Activated CD4-positive, alpha-beta memory T cell treated with anti-CD3 and anti-CD28 coated beads, Interleukin-2, amount 10 ng/mL, durations not matched to agents 7 days and 5 days (primary cell): ENCODE measurements at regions of chr1 and their contacts with region 1.

Region 1: GRCh38 chr1:156625436-156626078 is 6.3 kb downstream of the HAPLN2 start:
- DNase-seq: peak; percentile 62
- H3K4me3 Mint-ChIP-seq: peak overlapping the region; percentile 35
- H3K27ac Mint-ChIP-seq: no peak overlapping the region
- H3K4me1 Mint-ChIP-seq: peaks cover 12% of the 10 kb centered on the region
- H3K27me3 Mint-ChIP-seq: peaks cover 64% of the 10 kb centered on the region

Region 2: GRCh38 chr1:156054500-156055280 is 570.9 kb before region 1 on chr1 and contains the start of gene LAMTOR2:
- CTCF ChIA-PET with region 1: no interaction called
- POLR2A ChIA-PET with region 1: no interaction called
- DNase-seq: peak; percentile 97
- H3K4me3 Mint-ChIP-seq: peak within 1 kb of the TSS; percentile 91
- H3K27ac Mint-ChIP-seq: peak within 1 kb of the TSS; percentile 82
- H3K4me1 Mint-ChIP-seq: peaks cover 33% of the 10 kb centered on the region
- H3K27me3 Mint-ChIP-seq: no peaks in the 10 kb centered on the region
- total RNA-seq, gene LAMTOR2: 63.1 to 66.2 TPM

Region 3: GRCh38 chr1:156517746-156518145 is 107.8 kb before region 1 on chr1:
- CTCF ChIA-PET with region 1: no interaction called
- POLR2A ChIA-PET with region 1: no interaction called
- DNase-seq: no peak
- H3K4me3 Mint-ChIP-seq: no peak overlapping the region
- H3K27ac Mint-ChIP-seq: no peak overlapping the region
- H3K4me1 Mint-ChIP-seq: no peaks in the 10 kb centered on the region
- H3K27me3 Mint-ChIP-seq: peaks cover 4% of the 10 kb centered on the region

Region 4: DNA sequence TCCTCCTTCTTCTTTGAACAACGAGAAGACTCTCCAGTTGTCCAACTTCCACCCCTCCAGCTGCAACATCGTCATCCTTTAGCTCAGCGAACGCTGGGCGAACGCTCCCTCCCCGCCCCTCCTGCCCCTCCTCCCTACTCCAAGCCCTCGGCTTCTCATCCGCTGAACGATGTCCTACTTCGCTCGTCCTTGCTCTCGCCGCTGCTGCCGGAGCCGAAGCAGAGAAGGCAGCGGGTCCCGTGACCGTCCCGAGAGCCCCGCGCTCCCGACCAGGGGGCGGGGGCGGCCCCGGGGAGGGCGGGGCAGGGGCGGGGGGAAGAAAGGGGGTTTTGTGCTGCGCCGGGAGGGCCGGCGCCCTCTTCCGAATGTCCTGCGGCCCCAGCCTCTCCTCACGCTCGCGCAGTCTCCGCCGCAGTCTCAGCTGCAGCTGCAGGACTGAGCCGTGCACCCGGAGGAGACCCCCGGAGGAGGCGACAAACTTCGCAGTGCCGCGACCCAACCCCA is 16.3 kb after region 1 on chr1 and contains the start of gene BCAN:
- CTCF ChIA-PET with region 1: interaction called, 80 read pairs
- POLR2A ChIA-PET with region 1: interaction called, 7 read pairs
- DNase-seq: no peak
- H3K4me3 Mint-ChIP-seq: no peak within 1 kb of the TSS
- H3K27ac Mint-ChIP-seq: peak within 1 kb of the TSS; percentile 49
- H3K4me1 Mint-ChIP-seq: peaks cover 42% of the 10 kb centered on the region
- H3K27me3 Mint-ChIP-seq: peaks cover 82% of the 10 kb centered on the region
- total RNA-seq, gene BCAN: not detected

Region 5: DNA sequence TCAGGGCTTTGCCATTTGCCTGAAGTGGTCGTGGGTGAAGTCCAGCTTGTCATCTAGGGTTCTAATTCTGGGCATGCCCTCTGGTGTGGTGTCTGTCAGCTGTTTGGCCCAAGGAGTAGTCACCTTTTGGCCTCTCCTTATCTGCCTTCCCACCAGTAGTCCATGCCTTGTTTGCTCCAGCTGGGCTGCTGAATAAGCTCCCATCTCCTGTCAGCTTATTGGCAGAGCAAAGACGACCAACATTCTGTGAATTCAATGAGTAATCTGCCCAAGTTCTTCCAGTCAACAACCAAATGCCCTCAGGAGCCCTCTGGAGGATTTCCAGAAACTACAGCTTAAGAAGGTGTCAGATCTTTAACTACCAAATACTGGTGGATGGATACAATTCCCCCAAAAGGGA is 23.4 kb after region 1 on chr1:
- CTCF ChIA-PET with region 1: interaction called, 80 read pairs
- POLR2A ChIA-PET with region 1: interaction called, 7 read pairs
- DNase-seq: no peak
- H3K4me3 Mint-ChIP-seq: no peak overlapping the region
- H3K27ac Mint-ChIP-seq: no peak overlapping the region
- H3K4me1 Mint-ChIP-seq: peaks cover 14% of the 10 kb centered on the region
- H3K27me3 Mint-ChIP-seq: peaks cover 75% of the 10 kb centered on the region

Region 6: DNA sequence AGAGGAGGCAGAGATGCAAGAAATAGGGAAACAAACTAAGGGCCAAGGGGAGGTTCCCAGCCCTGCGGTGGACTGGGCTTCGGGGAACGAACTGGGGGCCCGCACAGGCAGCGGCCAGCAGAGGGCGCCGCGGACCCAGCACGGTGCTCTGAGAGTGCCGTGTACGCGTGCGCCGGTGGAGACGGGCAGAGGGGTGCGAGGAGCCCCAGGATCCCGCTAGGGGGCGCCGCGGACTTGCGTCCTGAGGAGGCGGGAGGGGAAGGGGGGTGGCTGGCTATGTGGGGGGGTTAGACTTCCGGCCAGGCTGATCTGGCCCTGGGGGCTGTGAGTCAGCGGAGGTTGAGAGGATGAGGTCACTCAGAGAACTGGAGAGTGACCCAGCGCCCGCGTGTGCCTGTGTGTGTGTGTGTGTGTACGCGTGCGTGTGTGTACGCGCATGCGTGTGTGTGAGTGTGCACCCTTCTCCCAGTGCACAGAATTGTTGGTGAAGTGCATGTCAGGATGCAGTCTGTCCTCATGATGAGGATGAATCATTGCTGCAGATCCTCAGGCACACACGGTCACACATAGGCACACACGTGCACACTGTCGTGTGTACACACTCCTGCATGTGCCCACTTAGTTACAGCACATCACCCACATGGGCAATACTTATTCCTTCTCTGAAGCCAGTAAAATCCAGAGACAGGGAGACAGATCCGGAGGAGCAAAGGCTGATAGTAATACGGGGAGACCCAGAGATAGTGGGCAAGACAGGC is 34.6 kb after region 1 on chr1:
- CTCF ChIA-PET with region 1: interaction called, 275 read pairs
- POLR2A ChIA-PET with region 1: interaction called, 3 read pairs
- DNase-seq: peak; percentile 95
- H3K4me3 Mint-ChIP-seq: peak overlapping the region; percentile 83
- H3K27ac Mint-ChIP-seq: peak overlapping the region; percentile 86
- H3K4me1 Mint-ChIP-seq: peaks cover 72% of the 10 kb centered on the region
- H3K27me3 Mint-ChIP-seq: peaks cover 30% of the 10 kb centered on the region

Region 7: GRCh38 chr1:156677616-156678596 is 52.3 kb after region 1 on chr1:
- CTCF ChIA-PET with region 1: interaction called, 29 read pairs
- POLR2A ChIA-PET with region 1: no interaction called
- DNase-seq: peak; percentile 35
- H3K4me3 Mint-ChIP-seq: no peak overlapping the region
- H3K27ac Mint-ChIP-seq: no peak overlapping the region
- H3K4me1 Mint-ChIP-seq: peaks cover 14% of the 10 kb centered on the region
- H3K27me3 Mint-ChIP-seq: peaks cover 76% of the 10 kb centered on the region

Region 8: DNA sequence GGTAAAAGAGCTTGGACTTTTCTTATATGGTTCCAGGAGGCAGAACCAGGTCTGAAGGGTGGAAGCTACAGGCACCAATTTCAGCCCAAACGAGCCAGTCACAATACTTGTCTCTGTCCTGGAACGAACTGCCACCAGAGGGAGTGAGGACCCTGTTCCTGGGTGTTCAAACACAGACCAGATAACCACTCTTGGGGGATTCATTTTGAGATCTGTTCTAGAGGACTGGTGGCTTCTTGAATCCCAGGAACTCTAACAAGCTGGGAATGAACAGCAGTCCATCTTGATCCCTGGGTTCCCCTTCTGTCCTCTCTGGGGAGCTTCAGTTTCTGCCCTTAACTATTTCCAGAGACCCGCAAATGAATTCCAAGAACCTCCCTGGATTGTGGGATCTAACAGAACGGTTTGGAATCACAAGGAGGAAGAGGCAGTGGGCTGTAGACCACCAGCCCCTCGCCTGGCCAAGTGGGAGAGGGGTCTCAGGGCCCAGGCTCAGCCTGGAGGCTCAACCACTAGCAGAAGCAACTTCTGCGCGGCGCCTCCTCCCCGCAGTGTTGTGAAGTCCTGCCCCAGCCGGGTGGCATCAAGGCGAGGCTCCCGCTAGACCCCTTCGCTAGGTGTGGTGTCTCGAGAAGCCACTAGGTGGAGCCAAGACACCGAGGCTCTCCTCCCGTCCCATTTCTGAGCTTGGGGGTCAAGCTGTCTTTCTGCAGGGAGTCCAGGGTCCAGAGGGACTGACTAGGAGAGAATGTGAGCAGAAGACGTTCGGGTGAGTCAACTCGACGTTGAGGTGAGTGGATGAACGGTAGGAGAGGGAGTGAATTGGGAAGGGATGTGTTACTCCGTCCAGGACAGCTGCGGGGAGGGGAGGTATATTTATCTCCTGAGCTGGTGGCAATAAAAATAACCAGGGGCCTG is 63.7 kb after region 1 on chr1:
- CTCF ChIA-PET with region 1: interaction called, 22 read pairs
- POLR2A ChIA-PET with region 1: no interaction called
- DNase-seq: peak; percentile 76
- H3K4me3 Mint-ChIP-seq: no peak overlapping the region
- H3K27ac Mint-ChIP-seq: no peak overlapping the region
- H3K4me1 Mint-ChIP-seq: peaks cover 21% of the 10 kb centered on the region
- H3K27me3 Mint-ChIP-seq: peaks cover 65% of the 10 kb centered on the region

Region 9: DNA sequence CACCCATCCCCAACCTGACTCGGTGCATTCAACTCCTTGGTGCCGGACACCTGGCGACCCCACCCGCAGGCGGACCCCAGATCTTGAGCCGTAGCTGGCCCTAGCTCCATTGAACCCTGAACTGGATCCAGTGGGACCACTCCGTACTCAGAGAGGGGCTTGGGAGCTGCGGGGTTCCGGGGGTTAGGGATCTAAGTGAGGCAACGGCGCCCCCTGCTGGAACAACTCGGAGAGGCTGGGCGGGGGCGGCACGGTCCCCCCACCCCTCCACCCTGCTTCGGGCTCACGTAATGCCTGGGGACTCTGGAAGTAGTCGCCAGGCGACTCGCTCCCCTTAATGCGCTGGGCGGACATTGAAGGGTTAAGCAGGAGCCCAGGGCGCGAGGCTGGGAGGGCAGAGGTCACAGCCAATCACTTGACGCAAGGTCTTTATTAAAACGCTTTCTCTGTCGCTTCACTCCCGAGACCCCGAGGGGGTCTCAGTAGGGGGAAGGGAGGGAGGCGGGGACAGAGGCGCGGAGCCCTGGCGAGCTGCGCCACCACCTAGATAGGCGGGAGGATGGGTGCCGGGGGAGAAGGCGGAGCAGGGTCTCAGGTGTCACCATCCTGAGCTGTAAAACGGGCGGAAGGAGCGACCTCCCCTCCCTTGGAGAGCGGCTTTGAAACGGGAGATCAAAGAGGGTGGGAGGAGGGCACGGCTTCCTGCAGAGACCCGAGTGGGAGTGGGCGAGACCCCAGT is 80.5 kb after region 1 on chr1:
- CTCF ChIA-PET with region 1: interaction called, 13 read pairs
- POLR2A ChIA-PET with region 1: no interaction called
- DNase-seq: peak; percentile 69
- H3K4me3 Mint-ChIP-seq: peak overlapping the region; percentile 70
- H3K27ac Mint-ChIP-seq: no peak overlapping the region
- H3K4me1 Mint-ChIP-seq: peaks cover 21% of the 10 kb centered on the region
- H3K27me3 Mint-ChIP-seq: peaks cover 38% of the 10 kb centered on the region

Region 10: DNA sequence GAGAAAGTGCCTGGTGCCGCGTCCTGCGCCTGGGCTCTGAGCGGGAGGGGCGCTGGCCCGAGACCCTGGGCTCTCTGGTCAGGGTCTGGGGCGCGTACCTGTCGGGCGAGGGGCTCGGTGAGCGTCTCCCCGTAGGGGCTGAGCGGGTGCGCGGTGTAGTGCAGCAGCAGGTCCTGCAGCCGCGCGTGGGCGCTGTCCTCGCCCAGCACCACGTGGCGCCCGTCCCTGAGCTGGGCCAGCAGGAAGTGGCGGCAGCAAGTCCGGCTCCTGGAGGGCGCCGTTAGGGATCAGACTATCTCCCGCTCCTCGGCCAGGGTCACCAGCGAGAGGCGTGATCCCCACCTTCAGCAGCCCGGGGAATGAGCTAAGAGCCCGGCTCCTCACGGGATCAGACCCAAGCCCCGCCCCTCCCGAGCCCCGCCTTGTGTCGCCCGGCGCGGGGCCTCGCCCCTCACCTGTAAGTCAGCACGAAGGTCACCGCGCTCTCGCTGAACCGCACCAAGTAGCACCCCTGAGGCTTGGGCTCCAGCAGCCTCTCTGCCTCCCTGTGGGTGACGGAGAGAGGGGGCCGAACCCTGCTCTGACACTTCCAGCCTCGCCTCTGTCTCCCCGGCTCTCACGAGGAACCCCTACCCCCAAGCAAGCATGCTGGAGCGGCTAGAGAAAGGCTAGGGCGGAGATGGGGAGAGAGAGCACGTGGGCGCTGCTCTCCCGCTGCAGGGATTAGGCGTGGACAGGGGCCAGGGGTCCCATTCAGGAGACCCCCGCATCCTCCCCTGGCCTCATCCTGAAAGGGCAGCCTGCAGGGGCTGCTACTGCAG is 188.4 kb after region 1 on chr1:
- CTCF ChIA-PET with region 1: no interaction called
- POLR2A ChIA-PET with region 1: no interaction called
- DNase-seq: peak; percentile 75
- H3K4me3 Mint-ChIP-seq: peak overlapping the region; percentile 96
- H3K27ac Mint-ChIP-seq: peak overlapping the region; percentile 100
- H3K4me1 Mint-ChIP-seq: peaks cover 79% of the 10 kb centered on the region
- H3K27me3 Mint-ChIP-seq: no peaks in the 10 kb centered on the region